MCF 10A (cell line): ENCODE measurements at regions of chr10 and their contacts with region 1.

Region 1: GRCh38 chr10:47384148-47384921 is at the start of gene ZNF488:
- DNase-seq: peak; percentile 88
- H3K4me3 Mint-ChIP-seq: peak within 1 kb of the TSS; percentile 63
- H3K27ac Mint-ChIP-seq: peak within 1 kb of the TSS; percentile 55
- H3K4me1 Mint-ChIP-seq: peaks cover 8% of the 10 kb centered on the region
- H3K27me3 Mint-ChIP-seq: peaks cover 20% of the 10 kb centered on the region
- CTCF ChIP-seq: no peak
- total RNA-seq, gene ZNF488: 0.12 TPM in 2 replicates

Region 2: GRCh38 chr10:46234431-46235060 is 1149.8 kb before region 1 on chr10:
- CTCF ChIA-PET with region 1: no interaction called
- POLR2A ChIA-PET with region 1: no interaction called
- intact Hi-C with region 1: no loop called
- DNase-seq: no peak
- H3K4me3 Mint-ChIP-seq: no peak overlapping the region
- H3K27ac Mint-ChIP-seq: no peak overlapping the region
- H3K4me1 Mint-ChIP-seq: no peaks in the 10 kb centered on the region
- H3K27me3 Mint-ChIP-seq: peaks cover 7% of the 10 kb centered on the region
- CTCF ChIP-seq: no peak

Region 3: GRCh38 chr10:47225219-47225927 is 159.0 kb before region 1 on chr10:
- CTCF ChIA-PET with region 1: no interaction called
- POLR2A ChIA-PET with region 1: no interaction called
- intact Hi-C with region 1: no loop called
- DNase-seq: no peak
- H3K4me3 Mint-ChIP-seq: no peak overlapping the region
- H3K27ac Mint-ChIP-seq: no peak overlapping the region
- H3K4me1 Mint-ChIP-seq: no peaks in the 10 kb centered on the region
- H3K27me3 Mint-ChIP-seq: peaks cover 11% of the 10 kb centered on the region
- CTCF ChIP-seq: no peak

Region 4: DNA sequence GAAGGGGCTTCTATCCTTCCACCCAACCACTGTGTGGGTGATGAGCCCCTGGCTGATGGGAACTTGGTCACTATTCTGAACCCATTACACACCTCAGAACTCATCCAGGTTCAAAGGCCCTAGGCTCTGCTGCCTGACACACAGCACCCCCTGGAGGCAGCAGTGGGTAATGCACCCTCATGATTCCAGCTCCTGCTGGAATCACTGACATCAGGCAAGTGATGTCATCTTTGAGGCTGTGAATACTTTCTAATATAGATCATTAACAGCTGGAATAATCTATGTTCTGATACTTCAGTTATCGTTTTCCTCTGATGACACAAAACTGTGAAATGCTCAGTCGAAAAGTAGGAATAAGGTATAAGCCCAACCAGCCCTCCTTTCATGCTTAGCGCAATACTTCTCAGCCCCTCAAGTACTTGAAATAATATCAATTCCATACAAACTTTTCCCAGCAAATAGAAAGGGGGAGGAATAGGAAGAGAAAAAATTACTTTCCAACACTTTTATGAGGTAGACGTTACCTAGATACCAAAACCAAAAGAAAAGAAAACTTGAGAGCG is 43.6 kb before region 1 on chr10:
- CTCF ChIA-PET with region 1: no interaction called
- POLR2A ChIA-PET with region 1: no interaction called
- intact Hi-C with region 1: no loop called
- DNase-seq: peak; percentile 60
- H3K4me3 Mint-ChIP-seq: no peak overlapping the region
- H3K27ac Mint-ChIP-seq: no peak overlapping the region
- H3K4me1 Mint-ChIP-seq: no peaks in the 10 kb centered on the region
- H3K27me3 Mint-ChIP-seq: peaks cover 51% of the 10 kb centered on the region
- CTCF ChIP-seq: peak; percentile 93

Region 5: DNA sequence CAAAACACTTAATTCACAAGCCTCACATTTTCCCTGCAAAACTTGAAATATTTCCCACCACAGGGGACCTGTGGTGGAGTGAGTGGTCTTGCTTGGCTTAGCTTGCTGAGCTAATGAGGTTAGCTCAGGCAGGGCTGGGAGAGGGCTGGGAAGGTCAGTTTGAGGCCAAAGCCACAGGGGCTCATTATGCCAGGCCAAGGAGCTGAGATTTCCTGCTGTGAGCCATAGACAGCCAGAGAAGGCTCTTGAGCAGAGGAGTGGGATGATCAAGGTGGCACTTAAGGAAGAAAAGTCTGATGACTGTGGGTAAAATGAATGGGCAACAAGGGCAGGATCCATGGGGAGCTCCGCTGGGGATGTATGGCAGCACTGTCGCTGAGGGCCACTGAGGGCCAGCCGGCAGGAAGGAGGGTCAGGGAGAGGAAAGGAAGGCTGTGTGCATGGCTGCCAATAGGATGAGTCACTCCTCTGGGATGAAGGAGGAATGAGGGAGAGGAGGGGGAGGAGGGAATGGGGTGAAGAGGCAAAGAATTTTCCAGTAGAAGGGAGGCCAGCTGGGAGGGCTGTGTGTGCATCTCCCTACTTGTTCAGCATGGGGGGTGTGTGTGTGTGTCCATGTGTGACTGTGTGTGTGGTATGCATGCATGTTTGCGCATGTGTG is 18.4 kb after region 1 on chr10:
- CTCF ChIA-PET with region 1: interaction called, 3 read pairs
- POLR2A ChIA-PET with region 1: interaction called, 13 read pairs
- intact Hi-C with region 1: no loop called
- DNase-seq: peak; percentile 91
- H3K4me3 Mint-ChIP-seq: peak overlapping the region; percentile 28
- H3K27ac Mint-ChIP-seq: peak overlapping the region; percentile 47
- H3K4me1 Mint-ChIP-seq: peaks cover 20% of the 10 kb centered on the region
- H3K27me3 Mint-ChIP-seq: no peaks in the 10 kb centered on the region
- CTCF ChIP-seq: no peak